ENCODE measurements at regions of chr1 and their contacts with region 1.

Region 1: GRCh38 chr1:245079021-245079609 is 75.7 kb upstream of the KIF26B start:
- DNase-seq: peak in 1 of 2 experiments; percentile 44
- H3K4me3 ChIP-seq: no peak overlapping the region
- H3K27ac ChIP-seq: no peak overlapping the region
- H3K4me1 ChIP-seq: no peaks in the 10 kb centered on the region
- H3K27me3 ChIP-seq: peaks cover 16% of the 10 kb centered on the region; the same call in 1 of the 2 replicates
- CTCF ChIP-seq: peak; percentile 87

Region 2: GRCh38 chr1:244419024-244419423 is 660.1 kb before region 1 on chr1:
- CTCF ChIA-PET with region 1: no interaction called
- POLR2A ChIA-PET with region 1: no interaction called
- intact Hi-C with region 1: no loop called
- DNase-seq: no peak
- H3K4me3 ChIP-seq: no peak overlapping the region
- H3K27ac ChIP-seq: no peak overlapping the region
- H3K4me1 ChIP-seq: no peaks in the 10 kb centered on the region
- H3K27me3 ChIP-seq: no peaks in the 10 kb centered on the region
- CTCF ChIP-seq: no peak

Region 3: DNA sequence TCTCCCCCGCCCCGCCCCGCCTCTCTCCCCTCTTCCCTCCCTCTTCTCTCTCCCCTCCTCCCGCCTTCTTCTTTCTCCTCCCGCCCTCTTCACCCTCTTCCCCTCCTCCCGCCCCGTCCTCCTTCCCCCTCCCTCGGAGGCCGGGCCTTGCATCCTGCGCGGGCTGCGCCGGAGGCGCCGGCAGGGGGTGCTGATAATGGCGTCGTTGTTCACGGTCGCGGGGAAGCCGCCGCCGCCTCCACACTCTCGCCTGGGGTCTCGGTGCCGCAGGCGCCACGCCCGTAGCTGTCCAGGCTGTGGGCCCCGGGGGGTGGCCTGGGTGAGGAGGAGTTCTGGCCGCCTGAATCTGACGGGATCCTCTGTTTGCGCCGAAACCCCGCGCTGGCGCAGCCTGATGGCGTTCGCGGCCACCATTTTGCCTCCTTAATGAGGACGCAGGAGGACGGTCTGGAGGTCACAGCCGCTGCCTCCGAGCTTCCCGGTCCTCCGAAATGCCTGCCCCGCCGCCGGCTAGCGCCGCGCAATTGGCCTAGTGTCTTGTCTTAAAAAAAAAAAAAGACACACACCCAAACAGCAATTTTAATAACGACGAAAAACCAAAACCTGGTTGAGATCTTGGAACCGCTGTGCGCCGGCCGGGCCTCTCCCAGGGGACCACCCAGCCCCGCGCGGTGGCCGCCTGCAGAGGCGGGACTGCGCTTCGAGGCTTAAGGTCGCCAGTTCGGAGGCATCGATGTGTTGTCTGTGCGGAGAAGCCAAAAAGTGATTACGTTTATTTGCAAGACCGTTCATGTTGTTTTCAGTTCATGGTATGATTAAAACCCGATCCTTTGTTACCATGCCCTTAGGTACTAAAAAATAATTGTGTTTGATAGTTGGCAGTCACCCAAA is 108.2 kb before region 1 on chr1:
- CTCF ChIA-PET with region 1: no interaction called
- POLR2A ChIA-PET with region 1: no interaction called
- intact Hi-C with region 1: no loop called
- DNase-seq: peak; percentile 80 to 93
- H3K4me3 ChIP-seq: peak overlapping the region; percentile 65
- H3K27ac ChIP-seq: peak overlapping the region; percentile 97
- H3K4me1 ChIP-seq: peaks cover 25% of the 10 kb centered on the region
- H3K27me3 ChIP-seq: no peaks in the 10 kb centered on the region
- CTCF ChIP-seq: peak; percentile 65; the same call in 1 of the 2 replicates

Region 4: GRCh38 chr1:245107776-245108645 is 28.9 kb after region 1 on chr1:
- CTCF ChIA-PET with region 1: no interaction called
- POLR2A ChIA-PET with region 1: no interaction called
- intact Hi-C with region 1: no loop called
- DNase-seq: no peak
- H3K4me3 ChIP-seq: no peak overlapping the region
- H3K27ac ChIP-seq: no peak overlapping the region
- H3K4me1 ChIP-seq: no peaks in the 10 kb centered on the region
- H3K27me3 ChIP-seq: peaks cover 35% of the 10 kb centered on the region
- CTCF ChIP-seq: no peak

Region 5: DNA sequence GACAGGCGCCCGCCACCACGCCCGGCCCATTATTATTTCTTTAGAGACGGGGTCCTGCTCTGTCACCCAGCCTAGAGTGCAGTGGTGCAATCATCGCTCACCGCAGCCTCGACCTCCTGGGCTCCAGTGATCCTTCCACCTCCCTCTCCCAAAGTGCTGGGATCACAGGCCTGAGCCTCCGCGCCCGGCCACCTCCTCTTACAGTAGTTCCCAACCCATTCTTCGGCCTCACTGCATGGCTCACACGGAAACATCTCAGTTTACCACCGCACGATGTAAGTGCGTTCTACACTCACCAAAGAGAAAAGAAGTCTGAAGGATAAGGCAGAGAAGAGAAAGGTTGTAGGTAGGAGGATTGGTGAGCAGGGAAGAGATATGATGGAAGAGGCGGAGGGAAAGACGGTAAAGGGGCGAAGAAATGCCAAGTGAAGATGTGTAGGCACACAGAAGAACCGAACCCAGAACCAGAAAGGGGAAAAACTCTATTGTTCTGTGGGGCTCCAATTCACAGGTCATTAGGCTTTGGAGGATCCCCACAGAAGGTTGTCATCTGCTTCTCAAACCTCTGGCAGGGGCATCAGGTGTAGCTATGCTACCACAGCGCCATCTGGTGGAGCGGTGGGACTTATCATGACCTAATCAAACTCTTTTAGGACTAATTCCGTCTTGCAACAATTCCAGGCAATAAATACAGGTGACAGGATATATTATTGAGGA is 923.8 kb after region 1 on chr1:
- CTCF ChIA-PET with region 1: no interaction called
- POLR2A ChIA-PET with region 1: no interaction called
- intact Hi-C with region 1: loop called (anchors 1 kb)
- DNase-seq: peak in 1 of 2 experiments; percentile 71
- H3K4me3 ChIP-seq: no peak overlapping the region
- H3K27ac ChIP-seq: no peak overlapping the region
- H3K4me1 ChIP-seq: no peaks in the 10 kb centered on the region; the same call in 1 of the 2 replicates
- H3K27me3 ChIP-seq: no peaks in the 10 kb centered on the region
- CTCF ChIP-seq: peak; percentile 83

Region 6: GRCh38 chr1:246450611-246451251 is 1371.6 kb after region 1 on chr1:
- CTCF ChIA-PET with region 1: no interaction called
- POLR2A ChIA-PET with region 1: no interaction called
- intact Hi-C with region 1: loop called (anchors 10 kb)
- DNase-seq: no peak
- H3K4me3 ChIP-seq: no peak overlapping the region
- H3K27ac ChIP-seq: no peak overlapping the region
- H3K4me1 ChIP-seq: no peaks in the 10 kb centered on the region
- H3K27me3 ChIP-seq: no peaks in the 10 kb centered on the region
- CTCF ChIP-seq: peak; percentile 71

Measured in PC-9 (cell line).